ENCODE measurements at regions of chr20 and their contacts with region 1.

Region 1: GRCh38 chr20:44310664-44311639 is at the start of gene FITM2:
- DNase-seq: peak; percentile 98
- ATAC-seq: peak; percentile 97
- H3K4me3 Mint-ChIP-seq: peak within 1 kb of the TSS; percentile 82
- H3K27ac Mint-ChIP-seq: peak within 1 kb of the TSS; percentile 84
- H3K4me1 Mint-ChIP-seq: peaks cover 17% of the 10 kb centered on the region
- H3K27me3 Mint-ChIP-seq: no peaks in the 10 kb centered on the region
- total RNA-seq, gene FITM2: 2.4 to 2.5 TPM

Region 2: GRCh38 chr20:44115762-44116644 is 194.9 kb before region 1 on chr20:
- CTCF ChIA-PET with region 1: interaction called, 13 read pairs
- DNase-seq: no peak
- ATAC-seq: no peak
- H3K4me3 Mint-ChIP-seq: no peak overlapping the region
- H3K27ac Mint-ChIP-seq: no peak overlapping the region
- H3K4me1 Mint-ChIP-seq: peaks cover 9% of the 10 kb centered on the region
- H3K27me3 Mint-ChIP-seq: peaks cover 28% of the 10 kb centered on the region

Region 3: DNA sequence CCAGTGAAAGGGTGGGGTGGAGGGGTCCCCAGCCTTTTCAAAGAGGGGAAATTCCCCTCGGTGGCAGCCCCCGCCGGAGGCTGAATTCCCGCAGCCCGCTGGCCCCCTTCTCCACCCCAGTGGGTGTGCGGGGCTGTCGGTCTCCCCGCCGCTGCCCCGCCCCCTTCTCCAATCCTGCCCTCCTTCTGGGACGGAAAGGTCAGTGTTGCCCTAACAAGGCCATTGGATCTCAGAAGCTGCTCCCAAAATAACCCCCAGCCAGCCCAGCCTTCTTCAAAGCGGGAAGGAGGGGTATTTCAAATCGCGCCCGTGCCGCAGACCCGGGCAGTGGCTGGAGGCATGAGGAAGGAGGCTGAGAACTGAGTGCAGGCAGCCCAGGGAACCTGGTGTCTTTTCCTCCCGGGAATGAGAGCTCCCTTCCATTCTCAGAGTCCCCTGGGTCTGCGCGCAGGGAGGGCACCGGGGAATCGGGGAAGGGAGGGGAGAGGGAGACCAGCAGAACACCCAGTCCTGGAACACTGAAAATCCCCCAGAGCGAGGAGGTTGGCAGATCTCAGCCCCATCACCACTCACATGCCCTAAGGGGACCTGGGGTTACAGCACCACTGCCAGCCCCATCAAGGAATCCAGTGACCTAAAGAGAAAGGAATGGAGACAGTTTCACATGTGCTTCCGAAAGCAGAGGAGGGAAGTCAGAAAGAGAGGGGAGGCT is 123.7 kb before region 1 on chr20 and contains the start of gene JPH2:
- CTCF ChIA-PET with region 1: interaction called, 10 read pairs
- DNase-seq: no peak
- ATAC-seq: peak; percentile 20
- H3K4me3 Mint-ChIP-seq: peak within 1 kb of the TSS; percentile 22
- H3K27ac Mint-ChIP-seq: no peak within 1 kb of the TSS
- H3K4me1 Mint-ChIP-seq: peaks cover 17% of the 10 kb centered on the region
- H3K27me3 Mint-ChIP-seq: peaks cover 62% of the 10 kb centered on the region
- total RNA-seq, gene JPH2: not detected

Region 4: GRCh38 chr20:44209686-44210421 is 101.1 kb before region 1 on chr20:
- CTCF ChIA-PET with region 1: interaction called, 386 read pairs
- DNase-seq: peak; percentile 50
- ATAC-seq: no peak
- H3K4me3 Mint-ChIP-seq: peak overlapping the region; percentile 94
- H3K27ac Mint-ChIP-seq: peak overlapping the region; percentile 91
- H3K4me1 Mint-ChIP-seq: peaks cover 45% of the 10 kb centered on the region
- H3K27me3 Mint-ChIP-seq: no peaks in the 10 kb centered on the region

Region 5: GRCh38 chr20:44326391-44327159 is 15.6 kb after region 1 on chr20:
- CTCF ChIA-PET with region 1: interaction called, 17 read pairs
- DNase-seq: no peak
- ATAC-seq: peak; percentile 47
- H3K4me3 Mint-ChIP-seq: no peak overlapping the region
- H3K27ac Mint-ChIP-seq: no peak overlapping the region
- H3K4me1 Mint-ChIP-seq: no peaks in the 10 kb centered on the region
- H3K27me3 Mint-ChIP-seq: peaks cover 17% of the 10 kb centered on the region

Region 6: GRCh38 chr20:44388466-44389023 is 77.6 kb after region 1 on chr20:
- CTCF ChIA-PET with region 1: interaction called, 13 read pairs
- DNase-seq: peak; percentile 82
- ATAC-seq: peak; percentile 92
- H3K4me3 Mint-ChIP-seq: no peak overlapping the region
- H3K27ac Mint-ChIP-seq: no peak overlapping the region
- H3K4me1 Mint-ChIP-seq: peaks cover 3% of the 10 kb centered on the region
- H3K27me3 Mint-ChIP-seq: peaks cover 16% of the 10 kb centered on the region